Cardiac septum (tissue), 1 donor: ENCODE measurements at regions of chr5 and their contacts with region 1.

Region 1: GRCh38 chr5:140372971-140373487 is 13.0 kb downstream of the SLC4A9 start:
- DNase-seq: peak; percentile 82

Region 2: DNA sequence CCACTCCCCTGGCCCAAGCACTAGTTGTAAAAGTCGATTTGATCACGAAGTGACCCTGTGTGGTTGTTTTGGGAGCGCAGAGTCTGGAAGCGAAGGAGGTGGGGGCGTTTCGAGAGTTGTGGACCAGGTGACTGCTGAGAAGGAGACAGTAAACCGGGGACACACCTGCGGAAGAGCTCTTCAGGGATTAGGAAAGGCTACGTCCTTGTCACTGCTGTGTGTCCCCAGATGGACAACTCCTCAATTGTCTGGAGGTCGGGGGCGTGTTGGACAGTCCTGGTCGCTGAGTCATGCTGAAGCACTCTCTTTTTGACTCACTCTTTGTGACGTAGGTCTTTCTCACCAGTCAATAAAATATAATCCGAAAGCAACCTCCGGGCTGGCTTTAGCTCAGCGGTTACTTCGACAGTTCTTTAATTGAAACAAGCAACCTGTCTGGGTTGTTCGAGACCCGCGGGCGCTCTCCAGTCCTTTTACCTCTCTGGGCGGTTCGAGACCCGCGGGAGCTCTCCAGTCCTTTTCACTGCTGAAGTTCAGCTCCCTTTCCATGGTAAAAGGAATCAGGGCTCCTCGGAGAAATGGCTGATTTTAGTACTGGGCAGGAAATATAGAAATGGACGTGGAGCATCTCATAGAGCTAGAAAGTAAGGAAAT is 338.0 kb after region 1 on chr5:
- intact Hi-C with region 1: loop called (anchors 5 kb)
- DNase-seq: peak; percentile 90